Activated CD4-positive, alpha-beta T cell treated with anti-CD3 and anti-CD28 coated beads, Interleukin-2, amount 10 ng/mL, durations not matched to agents 24 days and 14 days (primary cell): ENCODE measurements at regions of chr14 and their contacts with region 1.

Region 1: DNA sequence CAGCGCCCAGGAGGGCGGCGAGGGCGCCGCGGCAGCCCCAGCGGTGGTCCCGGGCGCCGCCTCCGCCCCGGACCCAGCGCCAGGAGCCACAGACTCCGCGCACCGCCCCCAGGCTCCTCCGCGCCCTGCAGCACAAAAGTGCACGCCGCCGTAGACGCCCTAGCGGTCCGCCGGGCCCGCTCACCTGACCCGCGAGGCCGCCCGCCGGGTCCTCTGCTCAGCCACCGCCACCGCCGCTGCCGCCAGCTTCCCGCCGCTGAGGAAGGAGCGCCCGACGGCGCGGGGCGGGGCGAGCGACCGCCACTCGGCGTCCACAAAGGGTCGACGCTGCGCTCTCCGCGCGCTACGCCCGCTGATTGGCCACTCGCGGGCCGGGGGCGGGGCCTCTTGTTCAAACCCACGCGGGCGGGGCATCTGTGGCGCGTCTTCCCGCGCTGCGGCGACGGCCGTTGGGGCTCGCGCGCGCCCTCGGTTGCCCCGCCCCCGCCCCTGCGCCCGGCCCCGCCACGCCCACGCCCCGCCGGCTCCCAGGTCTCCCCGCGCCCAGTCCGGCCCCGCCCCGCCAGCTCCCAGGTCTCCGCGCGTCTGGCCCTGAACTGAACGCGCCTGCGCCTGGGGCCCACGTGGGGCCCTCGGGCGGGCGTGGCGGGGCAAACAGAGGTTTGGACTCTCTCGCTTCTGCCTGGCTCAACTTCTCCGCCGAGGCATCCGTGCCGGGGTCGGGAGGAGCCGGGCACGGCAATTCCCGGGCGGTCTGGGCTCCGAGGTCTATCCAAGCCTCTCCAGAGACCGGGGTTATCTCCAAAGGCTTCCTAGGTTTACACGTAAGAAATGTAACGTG is at the start of gene CDCA4:
- DNase-seq: peak; percentile 99
- H3K4me3 Mint-ChIP-seq: peak within 1 kb of the TSS; percentile 100
- H3K27ac Mint-ChIP-seq: peak within 1 kb of the TSS; percentile 95
- H3K4me1 Mint-ChIP-seq: peaks cover 55% of the 10 kb centered on the region
- H3K27me3 Mint-ChIP-seq: no peaks in the 10 kb centered on the region
- total RNA-seq, gene CDCA4: 64.6 and 66.3 TPM in 2 replicates

Region 2: DNA sequence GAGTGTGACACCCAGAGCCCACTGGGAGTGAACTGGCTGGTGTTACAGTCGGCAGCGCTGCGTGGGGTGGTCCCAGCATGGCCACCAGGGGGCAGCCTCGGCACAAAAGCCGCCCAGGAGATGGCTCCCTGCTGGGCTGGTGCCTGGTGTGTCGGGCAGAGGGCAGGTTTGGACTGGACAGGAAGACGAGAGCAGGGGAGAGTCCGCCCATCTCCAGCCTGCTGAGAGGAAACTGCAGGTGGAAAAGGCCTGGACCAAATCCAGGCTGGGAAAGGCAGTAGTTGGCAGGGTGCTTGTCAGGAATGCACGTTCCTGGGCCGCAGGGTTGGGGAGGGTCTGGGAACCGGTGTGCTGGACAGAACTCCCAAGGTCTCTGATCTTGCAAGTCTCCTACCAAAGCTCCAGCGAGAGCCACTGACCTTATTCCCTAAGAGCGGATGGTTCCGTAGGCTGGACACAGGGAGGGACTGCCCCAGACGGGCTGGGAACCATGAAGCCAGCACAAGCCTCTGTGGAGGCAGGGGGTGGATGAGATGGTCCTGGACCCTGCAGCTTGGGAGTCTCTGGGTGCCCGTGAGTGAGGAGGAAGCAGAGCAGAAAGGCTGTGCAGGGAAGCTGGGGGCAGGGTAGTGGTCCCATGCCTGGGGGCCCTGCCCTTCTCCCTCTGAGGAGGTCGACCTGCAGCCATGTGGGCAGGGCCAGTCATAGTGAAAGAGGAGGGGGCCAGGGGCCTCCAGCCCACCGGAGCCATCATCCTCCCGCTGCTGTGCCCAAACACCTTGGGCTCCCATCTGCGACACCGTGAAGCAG is 44.6 kb before region 1 on chr14:
- intact Hi-C with region 1: loop called (anchors 1 kb)
- DNase-seq: peak; percentile 96
- H3K4me3 Mint-ChIP-seq: peak overlapping the region; percentile 31
- H3K27ac Mint-ChIP-seq: no peak overlapping the region
- H3K4me1 Mint-ChIP-seq: peaks cover 9% of the 10 kb centered on the region
- H3K27me3 Mint-ChIP-seq: peaks cover 24% of the 10 kb centered on the region

Region 3: GRCh38 chr14:105045710-105046326 is 24.8 kb after region 1 on chr14:
- intact Hi-C with region 1: loop called (anchors 1 kb)
- DNase-seq: peak; percentile 98
- H3K4me3 Mint-ChIP-seq: no peak overlapping the region
- H3K27ac Mint-ChIP-seq: peak overlapping the region; percentile 44
- H3K4me1 Mint-ChIP-seq: peaks cover 9% of the 10 kb centered on the region
- H3K27me3 Mint-ChIP-seq: peaks cover 3% of the 10 kb centered on the region

Region 4: DNA sequence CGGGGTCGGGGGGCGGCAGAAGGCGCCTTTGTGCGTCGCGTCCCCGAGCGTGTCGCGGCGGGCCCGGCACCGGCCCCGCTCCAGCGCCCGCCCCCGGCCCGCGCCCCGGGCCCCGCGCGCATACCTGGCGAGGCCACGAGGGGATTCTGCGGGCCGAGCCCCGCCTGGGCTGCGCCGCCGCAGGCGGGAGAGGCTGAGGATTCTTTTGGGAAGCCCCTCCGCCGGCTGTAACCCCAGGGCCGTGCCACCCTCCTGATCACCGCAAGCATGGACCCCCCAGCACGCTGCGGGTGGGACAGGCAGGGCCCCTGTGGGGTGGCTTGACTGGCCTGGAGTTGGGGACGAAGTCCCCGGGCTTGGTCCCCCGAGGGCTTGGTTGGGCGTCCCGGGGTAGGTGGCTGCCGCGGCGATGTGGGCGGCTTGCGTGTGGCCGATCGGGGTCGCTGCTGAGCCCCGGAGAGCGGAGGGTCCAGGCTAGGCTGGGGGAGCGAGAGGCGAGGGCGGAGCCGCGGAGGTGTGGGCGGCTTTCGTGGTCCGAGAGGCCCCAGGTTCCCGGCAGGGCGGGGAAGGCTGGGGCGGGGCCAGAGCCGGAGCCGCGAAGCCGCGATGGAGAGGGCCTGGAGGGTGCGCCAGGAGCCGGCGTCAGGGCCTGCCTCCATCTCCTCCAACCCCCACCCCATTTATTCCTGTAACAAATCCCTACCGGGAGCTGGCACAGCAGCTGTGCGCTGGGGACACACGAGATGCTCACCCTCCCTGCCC is 72.6 kb after region 1 on chr14:
- intact Hi-C with region 1: loop called (anchors 2 kb)
- DNase-seq: peak; percentile 92
- H3K4me3 Mint-ChIP-seq: peak overlapping the region; percentile 83
- H3K27ac Mint-ChIP-seq: peak overlapping the region; percentile 79
- H3K4me1 Mint-ChIP-seq: peaks cover 16% of the 10 kb centered on the region
- H3K27me3 Mint-ChIP-seq: peaks cover 8% of the 10 kb centered on the region